ENCODE measurements at regions of chr13 and their contacts with region 1.

Region 1: DNA sequence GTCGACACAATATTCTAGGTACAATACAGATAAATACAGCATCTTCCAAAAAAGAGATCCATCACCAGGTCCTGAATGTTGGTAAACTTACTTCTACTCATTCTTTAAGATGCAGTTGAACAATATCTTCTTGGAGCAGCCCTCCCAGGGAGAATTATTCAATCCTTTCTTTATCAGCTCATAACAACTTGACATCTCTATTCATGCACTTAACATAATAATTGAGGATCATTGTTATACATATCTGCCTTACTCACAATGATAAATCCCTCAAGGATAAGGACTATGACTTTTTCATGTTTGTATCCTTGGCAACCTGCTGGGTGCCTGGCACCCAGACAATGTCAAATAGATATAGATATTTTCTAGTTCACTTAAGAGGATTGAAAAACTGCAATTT is 219.5 kb downstream of the POU4F1 start:
- DNase-seq: no peak
- H3K27ac ChIP-seq: no peak overlapping the region
- CTCF ChIP-seq: no peak

Region 2: DNA sequence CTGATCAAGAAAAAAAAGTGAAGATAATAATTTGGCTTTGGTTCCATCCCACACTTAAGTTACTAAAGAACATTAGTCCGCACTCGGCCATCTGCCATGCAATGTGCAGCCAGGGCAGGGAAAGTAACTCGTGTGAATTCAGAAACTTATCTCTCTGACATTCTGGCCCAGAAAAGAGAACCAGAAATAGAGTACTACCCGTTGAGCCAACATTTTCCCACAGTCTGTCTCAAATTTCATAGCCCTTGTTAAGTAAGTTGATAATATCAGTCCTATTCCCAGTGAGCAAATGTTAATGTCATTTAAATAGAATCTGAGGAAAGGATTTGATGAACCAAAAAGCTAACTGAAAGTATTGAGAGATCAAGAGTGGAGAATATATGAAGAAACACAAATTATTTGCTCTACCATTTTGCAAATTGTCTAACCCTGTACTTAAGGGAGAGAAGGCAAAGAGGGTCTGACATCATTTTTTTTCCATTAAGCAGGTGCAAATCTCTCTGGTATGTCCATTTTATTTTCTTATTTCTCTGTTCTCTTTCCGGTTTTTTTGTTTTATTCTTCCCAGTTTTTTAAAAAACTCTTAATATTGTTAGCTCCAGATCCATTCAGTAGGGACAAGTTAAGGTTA is 1253.3 kb after region 1 on chr13:
- CTCF ChIA-PET with region 1: interaction called, 10 read pairs
- POLR2A ChIA-PET with region 1: no interaction called
- DNase-seq: no peak
- H3K27ac ChIP-seq: no peak overlapping the region
- CTCF ChIP-seq: no peak